Endothelial cell of umbilical vein (primary cell): ENCODE measurements at regions of chr1 and their contacts with region 1.

Region 1: DNA sequence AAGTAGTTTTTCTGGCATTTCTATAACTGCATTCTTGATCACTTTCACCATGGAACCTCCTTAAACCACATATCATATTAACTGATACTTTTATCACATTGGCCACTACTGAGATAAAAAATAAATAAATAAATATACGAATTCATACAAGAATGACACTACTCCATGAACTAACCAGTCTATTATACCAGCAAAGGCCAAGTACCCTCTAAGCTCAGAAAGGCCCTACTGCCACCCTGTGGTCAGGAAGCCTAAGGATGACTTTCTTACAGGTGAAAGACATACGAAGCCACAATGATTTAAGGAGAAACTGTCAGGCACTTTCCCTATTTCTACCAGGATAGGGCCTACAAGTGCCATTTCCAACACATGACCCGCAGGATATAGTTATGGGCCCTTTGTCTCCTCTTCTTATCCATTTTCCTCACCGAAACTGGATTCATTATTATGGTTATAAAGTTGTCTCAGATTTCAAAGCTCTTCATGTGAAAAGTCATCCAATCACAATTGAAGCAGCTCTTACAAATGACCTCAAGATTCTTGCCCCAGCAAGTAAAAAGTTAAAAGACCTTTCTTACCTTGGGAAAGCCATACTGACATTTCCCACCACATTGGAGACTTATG is 23.9 kb downstream of the DNAJC8 start:
- DNase-seq: peak; percentile 78
- H3K4me3 ChIP-seq: no peak overlapping the region
- H3K27ac ChIP-seq: no peak overlapping the region
- H3K4me1 ChIP-seq: no peaks in the 10 kb centered on the region
- H3K27me3 ChIP-seq: no peaks in the 10 kb centered on the region
- CTCF ChIP-seq: peak; percentile 55 to 64
- POLR2A ChIP-seq: no peak

Region 2: DNA sequence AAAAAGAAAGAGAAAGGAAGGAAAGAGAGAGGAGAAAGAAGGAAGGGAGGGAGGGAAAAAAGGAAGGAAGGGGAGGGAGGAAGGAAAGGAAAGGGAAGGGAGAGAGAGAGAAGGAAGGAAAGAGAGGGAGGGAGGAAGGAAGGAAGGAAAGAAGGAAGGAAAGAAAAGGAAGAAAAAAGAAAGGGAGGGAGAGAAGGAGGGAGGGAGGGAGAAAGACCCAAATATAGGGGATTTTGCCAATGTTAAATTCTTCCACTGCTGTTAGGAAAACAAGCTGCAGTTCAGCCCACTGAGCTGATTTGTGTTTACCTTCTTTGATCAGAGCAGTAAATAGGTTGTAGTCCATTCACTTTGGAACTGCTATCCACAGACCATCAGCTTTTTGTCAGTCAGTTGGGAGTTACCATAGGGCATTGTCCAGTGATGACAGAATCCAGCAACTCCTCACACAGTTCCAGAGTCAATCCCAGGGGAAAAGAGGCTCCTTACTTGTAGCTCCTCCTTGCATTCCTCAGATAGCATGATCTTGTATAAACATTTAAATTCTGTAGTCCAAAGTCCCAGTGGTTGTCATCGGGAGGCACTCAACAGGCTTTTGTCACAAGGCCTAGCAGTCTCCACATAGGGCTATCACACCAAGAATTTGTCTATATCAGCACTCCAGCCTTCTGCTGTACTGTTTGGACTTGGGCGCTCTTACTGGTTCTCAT is 391.9 kb before region 1 on chr1:
- CTCF ChIA-PET with region 1: no interaction called
- POLR2A ChIA-PET with region 1: no interaction called
- dilution Hi-C with region 1: no loop called
- intact Hi-C with region 1: no loop called
- DNase-seq: no peak
- H3K4me3 ChIP-seq: no peak overlapping the region
- H3K27ac ChIP-seq: no peak overlapping the region
- H3K4me1 ChIP-seq: no peaks in the 10 kb centered on the region
- H3K27me3 ChIP-seq: no peaks in the 10 kb centered on the region
- CTCF ChIP-seq: no peak
- POLR2A ChIP-seq: no peak

Region 3: DNA sequence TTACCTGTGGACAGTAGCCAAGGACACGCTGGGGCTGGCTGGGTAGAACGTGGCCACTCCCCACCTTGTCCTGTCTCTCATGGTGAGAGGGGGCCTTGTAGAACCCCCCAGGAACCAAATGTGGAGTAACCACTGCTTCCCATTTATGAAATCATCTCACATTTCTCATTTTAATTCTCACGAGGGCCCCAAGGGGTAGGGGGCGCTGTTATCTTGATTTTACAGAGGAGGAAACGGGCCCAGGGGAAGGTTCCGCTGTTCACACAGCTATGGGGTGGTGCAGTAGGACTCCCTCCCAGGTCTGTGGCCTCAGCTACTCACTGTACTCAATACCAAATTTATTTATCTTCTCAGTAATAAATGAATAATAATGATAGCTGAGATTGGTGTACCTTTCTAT is 268.6 kb before region 1 on chr1:
- CTCF ChIA-PET with region 1: interaction called, 12 read pairs
- POLR2A ChIA-PET with region 1: no interaction called
- dilution Hi-C with region 1: no loop called
- intact Hi-C with region 1: loop called (anchors 2 kb)
- DNase-seq: peak; percentile 44
- H3K4me3 ChIP-seq: no peak overlapping the region
- H3K27ac ChIP-seq: no peak overlapping the region
- H3K4me1 ChIP-seq: peaks cover 7% of the 10 kb centered on the region
- H3K27me3 ChIP-seq: peaks cover 0 to 5% of the 10 kb centered on the region in 2 experiments
- CTCF ChIP-seq: peak; percentile 34 to 44
- POLR2A ChIP-seq: no peak

Region 4: GRCh38 chr1:27979151-27979858 is 229.6 kb before region 1 on chr1:
- CTCF ChIA-PET with region 1: interaction called, 8 read pairs
- POLR2A ChIA-PET with region 1: no interaction called
- dilution Hi-C with region 1: no loop called
- intact Hi-C with region 1: loop called (anchors 10 kb)
- DNase-seq: peak; percentile 82
- H3K4me3 ChIP-seq: no peak overlapping the region
- H3K27ac ChIP-seq: peak overlapping the region; percentile 36
- H3K4me1 ChIP-seq: peaks cover 3% of the 10 kb centered on the region
- H3K27me3 ChIP-seq: no peaks in the 10 kb centered on the region
- CTCF ChIP-seq: peak; percentile 22 to 31
- POLR2A ChIP-seq: no peak

Region 5: DNA sequence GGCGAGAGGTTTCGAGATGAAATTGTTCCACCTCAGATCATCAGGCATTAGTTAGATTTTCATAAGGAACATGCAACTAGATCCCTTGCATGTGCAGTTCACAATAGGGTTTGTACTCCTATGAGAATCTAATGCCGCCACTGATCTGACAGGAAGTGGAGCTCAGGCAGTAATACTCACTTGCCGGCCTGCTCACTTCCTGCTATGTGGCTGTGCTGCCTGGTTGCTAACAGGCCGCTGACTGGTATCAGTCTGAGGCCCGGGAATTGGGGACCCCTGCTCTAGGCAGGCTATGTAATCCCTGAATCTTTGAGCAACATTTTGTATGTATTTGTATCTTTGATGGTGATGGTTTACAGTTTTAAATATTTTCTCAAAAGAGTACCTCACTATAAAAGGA is 216.7 kb before region 1 on chr1:
- CTCF ChIA-PET with region 1: interaction called, 19 read pairs
- POLR2A ChIA-PET with region 1: no interaction called
- dilution Hi-C with region 1: no loop called
- intact Hi-C with region 1: loop called (anchors 10 kb)
- DNase-seq: peak; percentile 60
- H3K4me3 ChIP-seq: no peak overlapping the region
- H3K27ac ChIP-seq: peak overlapping the region; percentile 46
- H3K4me1 ChIP-seq: peaks cover 35% of the 10 kb centered on the region
- H3K27me3 ChIP-seq: no peaks in the 10 kb centered on the region
- CTCF ChIP-seq: no peak
- POLR2A ChIP-seq: no peak

Region 6: GRCh38 chr1:28194326-28195035 is 14.4 kb before region 1 on chr1:
- CTCF ChIA-PET with region 1: interaction called, 18 read pairs
- POLR2A ChIA-PET with region 1: no interaction called
- dilution Hi-C with region 1: no loop called
- intact Hi-C with region 1: no loop called
- DNase-seq: no peak
- H3K4me3 ChIP-seq: no peak overlapping the region
- H3K27ac ChIP-seq: no peak overlapping the region
- H3K4me1 ChIP-seq: peaks cover 3% of the 10 kb centered on the region
- H3K27me3 ChIP-seq: no peaks in the 10 kb centered on the region
- CTCF ChIP-seq: no peak
- POLR2A ChIP-seq: no peak